ENCODE measurements at regions of chr17 and their contacts with region 1.

Region 1: DNA sequence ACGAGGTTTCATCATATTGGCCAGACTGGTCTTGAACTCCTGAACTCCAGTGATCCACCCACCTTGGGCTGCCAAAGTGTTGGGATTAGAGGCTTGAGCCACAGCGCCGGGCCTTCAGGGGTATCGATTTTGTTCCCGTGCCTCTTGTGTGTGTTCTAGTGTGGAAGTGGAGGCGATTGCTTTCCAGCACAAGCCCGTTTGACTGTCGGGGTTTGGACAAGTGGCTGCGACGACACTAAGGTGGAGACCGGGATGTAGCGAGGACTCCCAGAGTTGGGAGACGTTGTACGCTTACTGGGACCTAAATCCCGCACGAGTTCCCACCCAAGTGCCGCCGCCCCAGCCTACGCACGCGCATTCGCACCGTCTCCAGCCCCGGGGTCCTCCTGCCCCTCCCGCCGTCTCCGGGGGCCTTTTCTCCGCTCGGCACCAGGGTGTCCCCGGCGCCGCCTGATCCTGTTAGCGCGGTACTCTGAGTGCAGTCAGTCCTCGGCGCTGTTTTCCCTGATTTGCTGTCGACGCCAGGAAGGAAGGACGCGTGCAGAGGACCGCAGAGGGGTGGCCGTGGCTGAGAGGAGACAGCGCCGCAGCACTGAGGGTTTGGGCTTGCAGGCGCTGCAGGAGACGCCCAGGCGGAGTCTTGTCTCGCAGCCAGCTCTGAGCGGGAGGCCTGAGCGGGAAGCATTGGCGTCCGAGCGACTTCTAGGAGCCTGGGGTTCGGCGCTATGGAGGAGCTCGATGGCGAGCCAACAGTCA is at the start of gene NUP85:
- DNase-seq: peak; percentile 90 to 96
- H3K4me3 ChIP-seq: peak within 1 kb of the TSS; percentile 93
- H3K27ac ChIP-seq: peak within 1 kb of the TSS; percentile 92
- H3K4me1 ChIP-seq: peaks cover 14% of the 10 kb centered on the region
- H3K27me3 ChIP-seq: no peaks in the 10 kb centered on the region
- CTCF ChIP-seq: no peak
- total RNA-seq, gene NUP85: 64.2 and 73.1 TPM in 2 replicates

Region 2: GRCh38 chr17:75173526-75173925 is 31.7 kb before region 1 on chr17:
- CTCF ChIA-PET with region 1: interaction called, 7 read pairs
- POLR2A ChIA-PET with region 1: interaction called, 10 read pairs
- intact Hi-C with region 1: no loop called
- DNase-seq: no peak
- H3K4me3 ChIP-seq: no peak overlapping the region
- H3K27ac ChIP-seq: peak overlapping the region; percentile 25; the same call in 1 of the 2 replicates
- H3K4me1 ChIP-seq: no peaks in the 10 kb centered on the region
- H3K27me3 ChIP-seq: no peaks in the 10 kb centered on the region
- CTCF ChIP-seq: no peak